Activated T-helper 1 cell treated with anti-CD3 and anti-CD28 coated beads, Interleukin-12 subunit alpha, Interleukin-12 subunit beta, Interleukin-2, Interleukin-4 antibody, amounts not matched to agents 30 ng/mL and 10 ng/mL and 1 ng/mL, durations not matched to agents 14 hours and 24 hours and 36 hours (primary cell): ENCODE measurements at regions of chr10 and their contacts with region 1.

Region 1: GRCh38 chr10:104121520-104122224 is at the start of gene SFR1:
- DNase-seq: peak; percentile 99
- H3K4me3 Mint-ChIP-seq: peak within 1 kb of the TSS; percentile 94
- H3K27ac Mint-ChIP-seq: peak within 1 kb of the TSS; percentile 99
- H3K4me1 Mint-ChIP-seq: peaks cover 44% of the 10 kb centered on the region
- H3K27me3 Mint-ChIP-seq: peaks cover 10% of the 10 kb centered on the region
- total RNA-seq, gene SFR1: 13.8 and 14.0 TPM in 2 replicates

Region 2: GRCh38 chr10:103696411-103697145 is 425.1 kb before region 1 on chr10:
- intact Hi-C with region 1: loop called (anchors 2 kb)
- DNase-seq: peak; percentile 71
- H3K4me3 Mint-ChIP-seq: peak overlapping the region; percentile 52
- H3K27ac Mint-ChIP-seq: peak overlapping the region; percentile 91
- H3K4me1 Mint-ChIP-seq: peaks cover 25% of the 10 kb centered on the region
- H3K27me3 Mint-ChIP-seq: peaks cover 3% of the 10 kb centered on the region

Region 3: GRCh38 chr10:103888113-103888841 is 233.4 kb before region 1 on chr10:
- intact Hi-C with region 1: loop called (anchors 1 kb)
- DNase-seq: no peak
- H3K4me3 Mint-ChIP-seq: no peak overlapping the region
- H3K27ac Mint-ChIP-seq: peak overlapping the region; percentile 73
- H3K4me1 Mint-ChIP-seq: peaks cover 32% of the 10 kb centered on the region
- H3K27me3 Mint-ChIP-seq: no peaks in the 10 kb centered on the region

Region 4: DNA sequence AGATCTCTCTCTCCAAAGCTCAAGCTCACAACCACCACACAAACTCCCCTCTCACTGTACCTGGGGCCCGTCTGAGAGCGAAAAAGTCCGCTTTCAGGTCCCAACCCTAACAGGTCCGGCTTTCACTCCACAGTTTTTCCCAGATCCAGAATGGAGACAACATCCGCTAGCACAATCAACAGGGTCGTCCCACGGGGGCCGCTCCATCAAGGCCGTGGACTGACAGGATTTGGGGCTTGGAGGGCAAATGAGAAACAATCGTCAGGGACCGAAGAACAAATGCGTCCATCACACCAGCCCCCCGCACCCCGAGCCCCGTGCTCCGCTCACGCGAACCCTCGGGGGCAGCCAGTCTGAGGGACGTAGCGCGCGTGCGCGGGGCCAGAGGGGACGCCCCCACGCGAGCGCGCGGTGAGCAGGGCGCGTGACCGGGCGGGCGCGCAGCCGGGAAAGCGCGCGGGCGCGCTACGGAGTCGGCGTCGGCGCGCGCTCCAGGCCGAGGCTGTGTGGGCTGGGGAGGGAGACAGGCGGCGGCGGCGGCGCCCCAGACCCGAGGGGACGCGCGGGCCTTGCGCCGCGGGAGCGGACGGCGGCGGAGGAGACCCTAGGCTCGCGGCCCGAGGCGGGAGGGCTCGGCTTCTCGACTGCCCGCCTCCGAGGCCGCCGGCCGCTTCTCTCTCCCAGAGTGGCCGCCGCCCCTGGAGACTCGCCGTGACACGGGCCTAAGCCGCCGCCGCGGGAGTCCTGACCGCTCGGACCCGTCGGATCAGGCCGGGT is 154.8 kb before region 1 on chr10 and contains the start of gene SLK:
- intact Hi-C with region 1: loop called (anchors 1 kb)
- DNase-seq: peak; percentile 81
- H3K4me3 Mint-ChIP-seq: peak within 1 kb of the TSS; percentile 97
- H3K27ac Mint-ChIP-seq: peak within 1 kb of the TSS; percentile 90
- H3K4me1 Mint-ChIP-seq: peaks cover 38% of the 10 kb centered on the region
- H3K27me3 Mint-ChIP-seq: no peaks in the 10 kb centered on the region
- total RNA-seq, gene SLK: 25.0 and 27.1 TPM in 2 replicates

Region 5: DNA sequence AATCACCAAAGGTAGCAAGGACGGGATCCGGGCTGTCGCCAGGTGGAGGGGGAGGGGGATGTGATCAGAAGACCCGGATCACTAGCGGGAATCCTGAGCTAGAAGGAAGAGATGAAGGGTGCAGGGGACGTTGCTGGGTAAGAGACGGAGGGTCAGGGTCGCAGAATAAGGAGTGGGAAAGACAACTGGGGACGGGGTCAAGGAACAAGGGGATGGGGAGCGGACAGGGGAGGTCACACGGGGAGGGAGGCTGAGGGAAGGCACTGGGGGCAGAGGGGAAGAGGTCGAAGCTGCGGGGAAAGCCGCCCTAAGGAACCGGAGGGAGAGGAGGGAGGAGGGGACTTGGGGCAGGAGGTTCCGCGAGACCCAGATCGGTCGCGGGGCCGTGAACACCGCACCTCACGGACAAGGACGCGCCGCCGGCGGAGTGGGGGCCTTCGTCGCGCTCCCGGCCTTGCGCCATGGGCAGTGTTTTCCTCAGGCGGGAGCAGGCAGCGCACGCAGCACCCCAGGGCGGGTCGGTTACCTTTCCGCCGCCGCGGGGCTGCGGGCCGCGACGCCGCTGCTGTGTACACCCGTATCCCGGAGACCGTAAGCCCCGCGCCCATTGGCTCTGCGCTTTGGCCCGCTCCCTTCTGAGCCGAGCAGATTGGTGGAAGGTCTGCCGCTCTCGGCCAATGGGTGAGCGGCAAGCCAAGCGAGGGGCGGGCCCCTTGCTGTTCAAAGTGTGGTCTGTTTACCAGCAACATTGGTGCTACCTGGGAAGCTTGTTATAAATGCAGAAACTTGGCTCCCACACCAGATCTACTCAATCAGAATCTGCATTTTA is 110.3 kb after region 1 on chr10 and contains the start of gene CFAP43:
- intact Hi-C with region 1: loop called (anchors 1 kb)
- DNase-seq: peak; percentile 99
- H3K4me3 Mint-ChIP-seq: peak within 1 kb of the TSS; percentile 82
- H3K27ac Mint-ChIP-seq: peak within 1 kb of the TSS; percentile 63
- H3K4me1 Mint-ChIP-seq: peaks cover 12% of the 10 kb centered on the region
- H3K27me3 Mint-ChIP-seq: peaks cover 33% of the 10 kb centered on the region
- total RNA-seq, gene CFAP43: not detected in 2 replicates

Region 6: DNA sequence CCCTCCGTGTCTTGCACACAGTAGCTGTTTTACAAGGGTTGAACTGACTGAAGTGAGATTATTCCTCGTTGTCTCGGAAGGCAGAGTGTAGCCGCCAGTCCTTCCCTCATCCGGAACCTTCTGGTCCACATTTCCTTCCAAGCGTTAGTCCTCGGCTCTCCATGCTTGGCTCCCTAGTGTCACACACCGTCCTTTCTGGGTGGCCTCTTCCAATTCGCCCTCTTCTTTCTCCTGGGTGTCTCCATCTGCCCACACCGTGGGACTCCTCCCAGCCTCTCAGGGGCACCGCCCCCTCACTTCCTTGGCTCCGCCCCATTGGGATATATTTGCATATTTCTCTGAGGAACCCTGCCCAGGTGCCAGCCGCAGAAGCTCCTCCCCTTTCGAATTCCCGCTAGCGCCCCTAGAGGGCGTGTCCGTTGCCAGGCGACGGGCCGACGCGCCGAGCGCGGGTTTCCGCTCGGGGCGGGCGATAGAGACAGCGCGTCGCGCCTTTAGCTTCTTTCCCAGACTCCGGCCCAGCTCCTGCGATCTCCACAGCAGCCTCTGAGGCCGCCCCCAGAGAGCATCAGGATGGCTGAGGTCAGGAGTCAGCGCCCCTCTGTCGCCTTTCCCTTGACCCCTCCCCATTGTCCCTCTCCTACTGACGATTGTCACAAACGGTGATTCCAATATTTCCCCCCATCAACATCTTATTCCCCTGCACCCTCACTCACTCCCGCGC is 231.8 kb after region 1 on chr10 and contains the start of gene CFAP58:
- intact Hi-C with region 1: loop called (anchors 2 kb)
- DNase-seq: peak; percentile 89
- H3K4me3 Mint-ChIP-seq: no peak within 1 kb of the TSS
- H3K27ac Mint-ChIP-seq: peak within 1 kb of the TSS; percentile 67
- H3K4me1 Mint-ChIP-seq: no peaks in the 10 kb centered on the region
- H3K27me3 Mint-ChIP-seq: peaks cover 2% of the 10 kb centered on the region
- total RNA-seq, gene CFAP58: 0.08 and 0.24 TPM in 2 replicates